ENCODE measurements at regions of chr14 and their contacts with region 1.

Region 1: DNA sequence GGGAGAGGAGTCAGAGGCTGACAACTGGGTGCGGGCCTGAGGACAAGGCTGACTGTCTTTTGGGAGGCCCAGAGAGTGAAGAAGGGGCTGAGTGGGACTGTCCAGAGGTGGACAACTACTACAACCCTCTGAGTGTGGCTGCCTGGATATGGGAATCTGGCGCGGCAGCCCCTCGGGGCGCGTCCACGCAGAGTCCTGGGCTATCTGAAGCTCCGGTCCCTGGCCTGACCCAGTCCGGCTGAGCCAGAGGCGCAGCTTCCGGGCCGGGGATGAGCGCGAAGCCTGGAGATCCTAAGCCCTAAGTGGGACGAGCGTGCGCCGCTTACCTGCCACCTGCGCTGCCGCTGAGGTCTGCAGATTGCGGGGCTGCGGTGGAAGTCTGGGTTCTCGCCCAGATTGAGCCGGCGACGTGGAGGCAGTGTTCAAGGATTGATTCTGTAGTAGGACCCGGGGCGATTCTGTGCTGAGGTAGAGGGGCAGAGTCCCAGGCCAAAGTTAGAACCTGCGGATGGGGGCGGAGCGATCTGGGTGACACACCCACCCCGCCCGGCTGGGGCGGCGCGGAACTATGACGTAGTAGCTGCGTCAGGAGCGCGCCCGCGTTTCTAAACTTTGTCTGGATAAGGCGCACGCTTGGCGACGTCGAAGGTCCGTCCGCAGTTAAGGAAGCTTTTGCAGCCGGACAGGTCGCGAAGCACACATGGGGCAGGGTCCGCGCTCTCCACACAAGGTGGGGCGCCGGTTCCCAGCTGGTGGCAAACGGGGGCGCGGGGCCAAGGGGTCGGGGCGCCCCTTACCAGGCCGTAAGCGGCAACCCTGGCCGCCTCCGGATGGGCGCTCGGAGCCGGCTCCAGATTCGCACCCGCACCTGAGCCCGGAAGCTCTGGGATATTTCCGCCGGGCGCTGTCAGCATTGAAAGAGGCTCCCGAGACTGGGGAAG is at the starts of genes DHRS1 and NOP9:
- DNase-seq: peak; percentile 93
- ATAC-seq: peak; percentile 87
- H3K4me3 Mint-ChIP-seq: peak within 1 kb of the TSS; percentile 86
- H3K27ac Mint-ChIP-seq: peak within 1 kb of the TSS; percentile 89
- H3K4me1 Mint-ChIP-seq: peaks cover 55% of the 10 kb centered on the region
- H3K27me3 Mint-ChIP-seq: no peaks in the 10 kb centered on the region
- total RNA-seq, gene DHRS1: 14.2 to 26.5 TPM
- total RNA-seq, gene NOP9: 34.2 to 38.3 TPM

Region 2: GRCh38 chr14:24215495-24216344 is 83.8 kb before region 1 on chr14 and contains the start of gene MDP1:
- CTCF ChIA-PET with region 1: interaction called, 41 read pairs
- DNase-seq: peak; percentile 94
- ATAC-seq: peak; percentile 76
- H3K4me3 Mint-ChIP-seq: peak within 1 kb of the TSS; percentile 97
- H3K27ac Mint-ChIP-seq: peak within 1 kb of the TSS; percentile 99
- H3K4me1 Mint-ChIP-seq: peaks cover 47% of the 10 kb centered on the region
- H3K27me3 Mint-ChIP-seq: no peaks in the 10 kb centered on the region
- total RNA-seq, gene MDP1: 11.4 to 16.9 TPM

Region 3: GRCh38 chr14:24232121-24232644 is 67.3 kb before region 1 on chr14 and contains the start of gene NEDD8:
- CTCF ChIA-PET with region 1: interaction called, 541 read pairs
- DNase-seq: peak; percentile 94
- ATAC-seq: peak; percentile 85
- H3K4me3 Mint-ChIP-seq: peak within 1 kb of the TSS; percentile 84
- H3K27ac Mint-ChIP-seq: peak within 1 kb of the TSS; percentile 95
- H3K4me1 Mint-ChIP-seq: peaks cover 53% of the 10 kb centered on the region
- H3K27me3 Mint-ChIP-seq: no peaks in the 10 kb centered on the region
- total RNA-seq, gene NEDD8: 181 to 205 TPM

Region 4: GRCh38 chr14:24271134-24271833 is 28.2 kb before region 1 on chr14 and contains the start of gene RABGGTA:
- CTCF ChIA-PET with region 1: interaction called, 108 read pairs
- DNase-seq: peak; percentile 92
- ATAC-seq: peak; percentile 92
- H3K4me3 Mint-ChIP-seq: peak within 1 kb of the TSS; percentile 84
- H3K27ac Mint-ChIP-seq: peak within 1 kb of the TSS; percentile 93
- H3K4me1 Mint-ChIP-seq: peaks cover 41% of the 10 kb centered on the region
- H3K27me3 Mint-ChIP-seq: no peaks in the 10 kb centered on the region
- total RNA-seq, gene RABGGTA: 34.3 to 44.6 TPM

Region 5: GRCh38 chr14:24279301-24280186 is 20.0 kb before region 1 on chr14:
- CTCF ChIA-PET with region 1: interaction called, 108 read pairs
- DNase-seq: peak; percentile 53
- ATAC-seq: peak; percentile 67
- H3K4me3 Mint-ChIP-seq: no peak overlapping the region
- H3K27ac Mint-ChIP-seq: no peak overlapping the region
- H3K4me1 Mint-ChIP-seq: peaks cover 25% of the 10 kb centered on the region
- H3K27me3 Mint-ChIP-seq: no peaks in the 10 kb centered on the region

Region 6: DNA sequence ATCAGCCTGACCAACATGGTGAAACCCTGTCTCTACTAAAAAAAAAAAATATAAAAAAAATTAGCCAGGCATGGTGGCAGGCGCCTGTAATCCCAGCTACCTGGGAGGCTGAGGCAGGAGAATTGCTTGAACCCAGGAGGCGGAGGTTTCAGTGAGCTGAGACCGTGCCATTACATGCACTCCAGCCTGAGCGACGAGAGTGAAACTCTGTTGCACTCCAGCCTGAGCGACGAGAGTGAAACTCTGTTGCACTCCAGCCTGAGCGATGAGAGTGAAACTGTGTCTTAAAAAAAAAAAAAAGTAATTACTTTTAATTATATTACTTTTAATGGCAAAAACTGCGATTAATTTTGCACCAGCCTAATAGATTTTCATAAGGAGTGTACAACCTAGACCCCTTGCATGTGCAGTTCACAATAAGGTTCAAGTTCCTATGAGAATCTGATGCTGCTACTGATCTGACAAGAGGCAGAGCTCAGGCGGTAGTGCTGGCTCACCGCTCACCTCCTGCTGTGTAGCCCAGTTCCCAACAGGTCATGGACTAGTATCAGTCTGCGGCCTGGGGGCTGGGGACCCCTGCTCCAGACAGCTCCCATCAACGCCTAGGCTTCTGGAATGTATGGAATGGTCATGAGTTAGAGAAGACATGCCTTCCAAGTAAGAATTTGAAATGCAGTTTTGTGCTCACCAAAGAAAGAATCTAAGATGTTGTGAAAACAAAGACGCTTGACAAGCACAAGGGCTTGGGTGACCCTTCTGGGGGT is 21.9 kb after region 1 on chr14:
- CTCF ChIA-PET with region 1: no interaction called
- DNase-seq: no peak
- ATAC-seq: no peak
- H3K4me3 Mint-ChIP-seq: no peak overlapping the region
- H3K27ac Mint-ChIP-seq: no peak overlapping the region
- H3K4me1 Mint-ChIP-seq: peaks cover 12% of the 10 kb centered on the region
- H3K27me3 Mint-ChIP-seq: peaks cover 12% of the 10 kb centered on the region